Activated T-helper 1 cell treated with anti-CD3 and anti-CD28 coated beads, Interleukin-12 subunit alpha, Interleukin-12 subunit beta, Interleukin-2, Interleukin-4 antibody, amounts not matched to agents 30 ng/mL and 10 ng/mL and 1 ng/mL, durations not matched to agents 14 hours and 24 hours and 36 hours (primary cell): ENCODE measurements at regions of chr11 and their contacts with region 1.

Region 1: DNA sequence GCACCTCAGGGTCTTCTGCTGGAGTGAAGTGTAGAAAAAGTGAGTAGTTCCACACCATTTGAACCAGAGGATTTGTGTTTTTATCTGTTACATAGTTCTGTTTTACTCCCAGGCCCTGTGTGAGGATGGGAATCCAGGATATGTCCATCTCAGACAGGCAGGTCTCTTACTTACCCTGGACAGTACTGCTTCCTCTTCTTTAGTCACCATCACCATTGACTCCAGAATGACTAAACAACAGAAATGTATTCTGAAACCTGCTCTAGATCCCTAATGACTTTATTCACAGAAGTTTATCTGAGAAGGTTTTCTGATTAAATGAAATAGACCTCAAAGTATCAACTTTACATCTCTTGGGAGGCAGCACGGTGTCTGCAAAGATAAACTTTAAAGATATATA is 33.6 kb downstream of the CYP2R1 start:
- DNase-seq: no peak
- H3K4me3 Mint-ChIP-seq: no peak overlapping the region
- H3K27ac Mint-ChIP-seq: no peak overlapping the region
- H3K4me1 Mint-ChIP-seq: peaks cover 10% of the 10 kb centered on the region
- H3K27me3 Mint-ChIP-seq: no peaks in the 10 kb centered on the region

Region 2: DNA sequence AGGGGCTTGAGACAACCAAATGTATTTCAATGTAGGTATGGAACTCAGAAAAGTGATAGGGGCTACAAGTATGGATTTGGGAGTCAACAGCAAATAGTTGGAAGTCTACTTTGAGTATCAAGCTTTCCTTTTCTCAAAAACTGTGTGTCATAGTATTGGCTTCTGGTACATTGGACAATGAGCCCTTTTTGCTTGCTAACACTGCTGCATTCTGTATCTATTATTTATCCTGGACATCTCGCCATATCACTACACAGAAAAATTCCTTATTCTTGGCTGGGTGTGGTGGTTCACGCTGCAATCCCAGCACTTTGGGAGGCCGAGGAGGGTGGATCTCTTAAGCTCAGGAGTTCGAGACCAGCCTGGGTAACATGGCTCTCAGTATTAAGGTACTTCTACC is 15.2 kb after region 1 on chr11:
- intact Hi-C with region 1: loop called (anchors 2 kb)
- DNase-seq: no peak
- H3K4me3 Mint-ChIP-seq: no peak overlapping the region
- H3K27ac Mint-ChIP-seq: no peak overlapping the region
- H3K4me1 Mint-ChIP-seq: peaks cover 20% of the 10 kb centered on the region
- H3K27me3 Mint-ChIP-seq: peaks cover 2% of the 10 kb centered on the region

Region 3: GRCh38 chr11:14894657-14895598 is 36.5 kb after region 1 on chr11:
- intact Hi-C with region 1: no loop called
- DNase-seq: no peak
- H3K4me3 Mint-ChIP-seq: peak overlapping the region; percentile 3
- H3K27ac Mint-ChIP-seq: peak overlapping the region; percentile 69
- H3K4me1 Mint-ChIP-seq: peaks cover 39% of the 10 kb centered on the region
- H3K27me3 Mint-ChIP-seq: no peaks in the 10 kb centered on the region